Pancreas (tissue), 10 donors: ENCODE measurements at regions of chr3 and their contacts with region 1.

Region 1: DNA sequence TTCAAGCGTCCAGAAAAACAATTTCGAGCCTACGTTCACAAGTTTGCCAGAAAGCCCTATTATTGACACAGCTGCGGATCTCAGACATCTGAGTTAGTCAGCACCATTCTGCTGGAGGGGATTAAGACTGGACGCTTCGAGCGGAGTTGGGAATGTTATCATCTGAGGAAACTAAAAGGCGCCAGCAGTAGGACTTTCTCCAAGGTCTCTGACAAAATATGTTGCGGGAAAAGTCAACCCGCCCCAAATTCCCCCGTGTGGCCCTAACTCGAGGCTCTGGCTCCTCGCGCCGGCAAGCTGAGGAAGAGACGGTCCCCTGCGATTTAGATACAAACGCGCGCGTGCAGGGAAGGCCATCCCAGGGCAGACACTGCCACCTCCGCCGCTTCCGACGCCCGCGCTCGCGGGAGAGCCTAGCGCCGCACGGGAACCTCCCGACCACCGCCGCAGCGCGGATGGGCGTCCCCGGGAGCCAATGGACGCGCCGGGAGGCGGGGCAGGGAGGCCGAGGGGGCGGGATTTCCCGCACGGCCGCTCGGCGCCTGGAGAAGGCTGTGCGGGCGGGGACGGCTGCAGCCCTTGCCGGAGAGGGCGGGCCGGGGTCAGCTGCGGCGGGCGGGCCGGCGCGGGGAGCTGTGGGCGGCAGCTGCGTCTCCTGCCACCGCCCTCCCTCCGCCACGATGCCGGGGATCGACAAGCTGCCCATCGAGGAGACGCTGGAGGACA is at the start of gene APPL1:
- DNase-seq: peak; percentile 88 to 97 (median 92)
- ATAC-seq: peak; percentile 92 to 96 (median 93)
- H3K4me3 ChIP-seq: peak within 1 kb of the TSS; percentile 57 to 89 (median 70)
- H3K27ac ChIP-seq: peak within 1 kb of the TSS; percentile 91 to 97 (median 94)
- H3K4me1 ChIP-seq: peaks cover 8 to 34% (median 29%) of the 10 kb centered on the region in 3 donors
- H3K27me3 ChIP-seq: no peaks in the 10 kb centered on the region
- CTCF ChIP-seq: no peak
- total RNA-seq, gene APPL1: 31.4 to 46.1 (median 36.2) TPM

Region 2: DNA sequence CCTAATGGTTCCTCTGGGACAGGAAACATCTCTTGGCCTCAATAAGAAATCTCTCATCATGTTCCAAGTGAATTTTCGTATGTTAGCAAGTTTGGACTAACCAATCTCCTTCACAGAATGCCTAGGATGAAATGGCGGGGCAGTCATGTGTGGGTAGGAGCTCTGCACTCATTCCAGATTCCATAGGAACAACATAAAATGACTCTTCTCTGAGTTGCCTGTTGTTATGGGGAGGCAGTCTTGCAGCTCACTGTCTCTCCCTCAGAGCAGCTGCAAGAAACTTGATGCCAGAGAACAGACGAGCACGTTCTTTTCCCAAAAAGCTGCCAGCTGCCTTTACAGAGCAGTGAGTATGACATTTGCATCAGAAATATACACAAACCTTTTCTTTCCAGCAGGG is 132.8 kb before region 1 on chr3:
- intact Hi-C with region 1: loop called in 1 of 3 experiments (anchors 10 kb)
- DNase-seq: no peak
- ATAC-seq: no peak
- H3K4me3 ChIP-seq: no peak overlapping the region
- H3K27ac ChIP-seq: no peak overlapping the region
- H3K4me1 ChIP-seq: no peaks in the 10 kb centered on the region
- H3K27me3 ChIP-seq: no peaks in the 10 kb centered on the region
- CTCF ChIP-seq: no peak

Region 3: DNA sequence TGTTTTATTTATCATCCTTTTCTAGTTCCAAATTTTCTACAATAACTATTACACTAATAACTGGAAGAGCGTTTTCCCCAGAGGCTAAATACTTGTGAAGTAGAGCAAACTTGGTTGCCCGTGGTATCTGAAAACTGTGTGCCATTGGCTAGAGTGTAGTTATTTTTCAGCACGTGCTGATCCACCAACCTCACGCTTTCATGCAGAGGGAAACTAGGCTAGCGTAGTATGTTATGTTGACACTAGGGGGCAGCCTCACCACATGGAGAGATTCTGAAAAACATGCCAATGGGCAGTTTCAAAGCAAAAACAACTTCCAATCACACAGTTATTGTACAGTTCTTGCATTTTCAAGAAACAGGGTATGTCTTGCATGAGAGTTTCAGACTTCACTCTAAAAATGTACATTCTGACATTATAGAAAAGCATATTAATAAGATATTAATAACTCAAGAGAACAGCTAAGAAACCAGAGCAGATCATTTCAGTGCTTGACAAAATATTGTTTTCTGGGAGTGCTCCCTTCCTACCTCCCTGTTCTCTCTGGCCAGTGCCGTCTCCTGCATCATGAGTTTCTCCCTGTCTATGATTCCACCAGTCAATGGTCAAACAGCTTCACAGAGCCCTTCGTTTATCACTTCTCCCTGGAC is 127.2 kb before region 1 on chr3:
- intact Hi-C with region 1: loop called in 2 of 3 experiments (anchors 10 kb)
- DNase-seq: peak in 4 of 6 donors; percentile 40 to 78 (median 46)
- ATAC-seq: peak; percentile 80 to 99 (median 94)
- H3K4me3 ChIP-seq: no peak overlapping the region
- H3K27ac ChIP-seq: no peak overlapping the region
- H3K4me1 ChIP-seq: no peaks in the 10 kb centered on the region
- H3K27me3 ChIP-seq: no peaks in the 10 kb centered on the region
- CTCF ChIP-seq: peak; percentile 74 to 89 (median 82)